CD4-positive, alpha-beta memory T cell (primary cell): ENCODE measurements at regions of chr4 and their contacts with region 1.

Region 1: GRCh38 chr4:186932631-186933187 is 209.1 kb upstream of the FAT1 start:
- DNase-seq: no peak
- H3K4me3 ChIP-seq: no peak overlapping the region
- H3K4me3 Mint-ChIP-seq: no peak overlapping the region
- H3K27ac ChIP-seq: no peak overlapping the region
- H3K27ac Mint-ChIP-seq: no peak overlapping the region
- H3K4me1 ChIP-seq: no peaks in the 10 kb centered on the region
- H3K4me1 Mint-ChIP-seq: no peaks in the 10 kb centered on the region
- H3K27me3 ChIP-seq: no peaks in the 10 kb centered on the region
- H3K27me3 Mint-ChIP-seq: no peaks in the 10 kb centered on the region

Region 2: DNA sequence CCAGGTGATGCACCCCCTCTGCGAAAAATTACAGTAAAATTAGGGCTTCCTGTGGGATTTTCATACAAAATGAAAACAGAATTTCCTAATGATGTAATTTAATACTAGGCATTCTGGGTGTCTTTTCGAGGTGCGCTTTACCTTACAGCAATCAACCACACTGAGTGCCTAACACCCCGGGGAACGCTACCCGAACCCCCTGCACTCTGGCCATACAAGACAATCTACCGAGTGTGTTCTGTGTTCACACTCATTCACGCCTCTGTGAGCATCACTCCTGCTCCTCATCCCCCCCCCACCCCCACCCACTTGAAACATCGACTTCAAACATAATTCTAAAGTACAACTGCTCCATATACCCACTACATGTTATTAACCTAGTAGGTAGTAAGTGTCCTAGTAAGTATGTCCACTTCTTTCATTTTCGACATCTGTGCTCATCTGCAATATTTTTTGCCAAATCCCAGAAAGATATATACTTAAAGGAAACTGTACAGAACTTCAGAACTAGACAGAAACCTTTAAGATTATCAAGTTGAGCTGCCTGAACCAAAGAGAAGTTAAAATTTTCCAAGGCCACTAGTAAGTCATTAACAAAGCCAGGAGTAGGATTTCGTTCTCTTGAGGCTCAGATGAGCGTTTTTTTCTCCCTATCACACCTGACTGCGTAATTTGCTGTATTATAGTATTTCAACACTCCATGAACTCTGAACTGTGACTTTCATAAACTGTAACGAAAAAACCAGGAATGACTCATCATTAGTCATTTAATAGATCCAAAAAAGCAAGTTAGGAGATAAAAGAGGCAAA is 289.0 kb before region 1 on chr4:
- CTCF ChIA-PET with region 1: no interaction called
- POLR2A ChIA-PET with region 1: no interaction called
- intact Hi-C with region 1: no loop called
- DNase-seq: no peak
- H3K4me3 ChIP-seq: no peak overlapping the region
- H3K4me3 Mint-ChIP-seq: no peak overlapping the region
- H3K27ac ChIP-seq: no peak overlapping the region
- H3K27ac Mint-ChIP-seq: no peak overlapping the region
- H3K4me1 ChIP-seq: no peaks in the 10 kb centered on the region
- H3K4me1 Mint-ChIP-seq: no peaks in the 10 kb centered on the region
- H3K27me3 ChIP-seq: no peaks in the 10 kb centered on the region
- H3K27me3 Mint-ChIP-seq: no peaks in the 10 kb centered on the region

Region 3: DNA sequence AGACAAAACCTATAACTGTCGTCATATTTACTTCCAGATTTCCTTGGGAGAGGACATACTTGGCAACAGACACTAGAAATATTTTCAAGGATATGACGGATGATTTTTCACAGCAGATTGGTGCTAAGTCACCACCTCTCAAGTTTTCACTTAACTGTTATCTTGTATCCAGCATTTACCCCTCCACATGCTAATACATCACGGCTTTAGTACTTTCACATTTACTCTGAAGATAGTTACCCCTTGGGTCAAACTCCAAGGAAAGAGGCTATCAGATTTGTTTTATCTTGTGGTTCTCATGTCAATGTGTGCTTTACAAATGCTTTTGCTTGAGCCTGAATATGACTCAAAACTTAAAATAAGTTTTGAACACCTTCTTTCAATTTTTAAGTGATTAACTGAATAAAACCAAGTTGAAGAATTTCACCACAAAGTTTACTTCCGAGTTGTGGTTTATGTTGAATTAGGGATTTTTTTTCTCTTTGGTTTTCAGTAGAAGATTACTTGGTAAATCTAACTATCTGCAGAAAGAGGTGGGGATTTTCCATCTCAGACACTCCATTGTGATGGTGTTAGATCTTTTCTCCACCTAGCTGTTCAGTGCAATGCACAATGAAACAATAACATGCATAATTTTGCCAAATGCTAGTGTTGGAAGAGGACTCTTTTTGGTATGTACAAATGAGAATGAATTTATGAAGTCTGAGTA is 133.6 kb before region 1 on chr4:
- CTCF ChIA-PET with region 1: no interaction called
- POLR2A ChIA-PET with region 1: no interaction called
- intact Hi-C with region 1: no loop called
- DNase-seq: no peak
- H3K4me3 ChIP-seq: no peak overlapping the region
- H3K4me3 Mint-ChIP-seq: no peak overlapping the region
- H3K27ac ChIP-seq: no peak overlapping the region
- H3K27ac Mint-ChIP-seq: no peak overlapping the region
- H3K4me1 ChIP-seq: no peaks in the 10 kb centered on the region
- H3K4me1 Mint-ChIP-seq: no peaks in the 10 kb centered on the region
- H3K27me3 ChIP-seq: no peaks in the 10 kb centered on the region
- H3K27me3 Mint-ChIP-seq: no peaks in the 10 kb centered on the region

Region 4: GRCh38 chr4:186999686-187000085 is 67.0 kb after region 1 on chr4:
- CTCF ChIA-PET with region 1: no interaction called
- POLR2A ChIA-PET with region 1: no interaction called
- intact Hi-C with region 1: loop called (anchors 5 kb)
- DNase-seq: no peak
- H3K4me3 ChIP-seq: no peak overlapping the region
- H3K4me3 Mint-ChIP-seq: no peak overlapping the region
- H3K27ac ChIP-seq: no peak overlapping the region
- H3K27ac Mint-ChIP-seq: no peak overlapping the region
- H3K4me1 ChIP-seq: no peaks in the 10 kb centered on the region
- H3K4me1 Mint-ChIP-seq: no peaks in the 10 kb centered on the region
- H3K27me3 ChIP-seq: no peaks in the 10 kb centered on the region
- H3K27me3 Mint-ChIP-seq: no peaks in the 10 kb centered on the region